Caco-2 (cell line): ENCODE measurements at regions of chr1 and their contacts with region 1.

Region 1: GRCh38 chr1:156500797-156501499 is 373 bp upstream of the MEF2D start:
- DNase-seq: peak; percentile 94
- H3K4me3 ChIP-seq: peak overlapping the region; percentile 93
- H3K4me3 Mint-ChIP-seq: peak overlapping the region; percentile 89
- H3K27ac Mint-ChIP-seq: peak overlapping the region; percentile 94
- H3K4me1 ChIP-seq: peaks cover 48% of the 10 kb centered on the region
- H3K4me1 Mint-ChIP-seq: peaks cover 33% of the 10 kb centered on the region
- H3K27me3 ChIP-seq: no peaks in the 10 kb centered on the region
- H3K27me3 Mint-ChIP-seq: no peaks in the 10 kb centered on the region
- CTCF ChIP-seq: peak; percentile 62 to 77

Region 2: GRCh38 chr1:156456622-156457465 is 44.1 kb before region 1 on chr1:
- CTCF ChIA-PET with region 1: interaction called, 87 read pairs
- POLR2A ChIA-PET with region 1: interaction called, 92 read pairs
- intact Hi-C with region 1: loop called (anchors 1 kb)
- DNase-seq: peak; percentile 98
- H3K4me3 ChIP-seq: peak overlapping the region; percentile 70
- H3K4me3 Mint-ChIP-seq: peak overlapping the region; percentile 88
- H3K27ac Mint-ChIP-seq: peak overlapping the region; percentile 90
- H3K4me1 ChIP-seq: peaks cover 13% of the 10 kb centered on the region
- H3K4me1 Mint-ChIP-seq: peaks cover 1% of the 10 kb centered on the region
- H3K27me3 ChIP-seq: no peaks in the 10 kb centered on the region
- H3K27me3 Mint-ChIP-seq: no peaks in the 10 kb centered on the region
- CTCF ChIP-seq: no peak

Region 3: DNA sequence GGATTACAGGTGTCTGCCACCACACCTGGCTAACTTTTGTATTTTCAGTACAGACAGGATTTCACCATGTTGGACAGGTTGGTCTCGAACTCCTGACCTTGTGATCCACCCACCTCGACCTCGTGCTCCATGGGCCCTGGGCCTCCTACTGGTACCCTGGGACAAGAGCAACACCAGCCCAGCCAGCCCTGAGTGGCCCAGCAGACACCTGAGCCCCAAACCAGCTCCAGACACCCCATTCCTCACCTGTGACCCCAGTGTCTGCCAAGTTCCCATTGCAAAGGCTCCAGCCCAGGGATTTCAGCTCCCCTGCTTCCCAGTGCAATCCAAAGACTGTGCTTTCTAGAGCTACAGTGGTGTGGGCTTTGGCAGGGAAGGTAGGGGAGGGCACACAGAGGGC is 15.0 kb before region 1 on chr1:
- CTCF ChIA-PET with region 1: interaction called, 15 read pairs
- POLR2A ChIA-PET with region 1: interaction called, 14 read pairs
- intact Hi-C with region 1: no loop called
- DNase-seq: no peak
- H3K4me3 ChIP-seq: no peak overlapping the region
- H3K4me3 Mint-ChIP-seq: no peak overlapping the region
- H3K27ac Mint-ChIP-seq: no peak overlapping the region
- H3K4me1 ChIP-seq: no peaks in the 10 kb centered on the region
- H3K4me1 Mint-ChIP-seq: peaks cover 13% of the 10 kb centered on the region
- H3K27me3 ChIP-seq: no peaks in the 10 kb centered on the region
- H3K27me3 Mint-ChIP-seq: no peaks in the 10 kb centered on the region
- CTCF ChIP-seq: no peak

Region 4: DNA sequence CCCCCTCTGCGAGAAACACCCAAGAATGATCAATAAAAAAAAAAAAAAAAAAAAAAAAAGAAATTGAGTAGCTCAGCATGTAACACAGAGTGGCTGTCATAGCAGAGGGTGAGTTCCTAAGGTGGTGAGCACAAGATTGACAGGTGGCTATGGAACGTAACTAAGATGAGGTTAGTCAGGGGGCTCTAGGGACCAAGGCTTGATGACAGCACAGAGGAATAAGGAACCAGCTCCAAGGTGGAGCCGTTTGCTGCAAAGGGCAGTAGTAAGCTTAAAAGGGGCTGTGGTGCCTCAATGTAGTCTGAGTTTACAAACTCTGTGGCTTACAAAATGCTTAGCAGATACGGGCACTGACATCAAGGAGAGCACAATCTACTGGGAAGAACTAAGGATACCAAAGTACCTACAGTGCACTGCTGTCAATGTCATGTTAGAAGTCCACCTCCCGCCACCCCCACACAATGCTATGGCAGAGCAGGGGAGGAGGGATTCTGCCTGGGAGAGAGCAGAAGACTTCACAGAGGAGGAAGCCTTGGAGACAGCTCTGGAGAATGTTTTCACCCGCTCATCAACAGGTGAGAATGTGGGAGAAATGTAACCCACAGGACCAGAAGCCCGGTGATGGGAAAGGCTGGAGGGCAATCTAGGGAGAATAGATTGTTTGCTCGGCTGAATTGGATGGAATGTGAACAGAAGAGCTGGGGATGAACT is 58.3 kb after region 1 on chr1:
- CTCF ChIA-PET with region 1: interaction called, 3 read pairs
- POLR2A ChIA-PET with region 1: interaction called, 11 read pairs
- intact Hi-C with region 1: no loop called
- DNase-seq: peak in 1 of 2 experiments; percentile 63
- H3K4me3 ChIP-seq: no peak overlapping the region
- H3K4me3 Mint-ChIP-seq: no peak overlapping the region
- H3K27ac Mint-ChIP-seq: no peak overlapping the region
- H3K4me1 ChIP-seq: peaks cover 26% of the 10 kb centered on the region
- H3K4me1 Mint-ChIP-seq: peaks cover 27% of the 10 kb centered on the region
- H3K27me3 ChIP-seq: no peaks in the 10 kb centered on the region
- H3K27me3 Mint-ChIP-seq: no peaks in the 10 kb centered on the region
- CTCF ChIP-seq: no peak

Region 5: GRCh38 chr1:156601122-156601830 is 100.3 kb after region 1 on chr1 and contains the start of gene GPATCH4:
- CTCF ChIA-PET with region 1: no interaction called
- POLR2A ChIA-PET with region 1: interaction called, 12 read pairs
- intact Hi-C with region 1: loop called (anchors 10 kb)
- DNase-seq: peak; percentile 85
- H3K4me3 ChIP-seq: peak within 1 kb of the TSS; percentile 84
- H3K4me3 Mint-ChIP-seq: peak within 1 kb of the TSS; percentile 79
- H3K27ac Mint-ChIP-seq: peak within 1 kb of the TSS; percentile 88
- H3K4me1 ChIP-seq: peaks cover 8% of the 10 kb centered on the region; the same call in 1 of the 2 replicates
- H3K4me1 Mint-ChIP-seq: no peaks in the 10 kb centered on the region
- H3K27me3 ChIP-seq: no peaks in the 10 kb centered on the region
- H3K27me3 Mint-ChIP-seq: no peaks in the 10 kb centered on the region
- CTCF ChIP-seq: no peak
- total RNA-seq, gene GPATCH4: 52.5 and 53.5 TPM in 2 replicates